ENCODE measurements at regions of chr7 and their contacts with region 1.

Region 1: DNA sequence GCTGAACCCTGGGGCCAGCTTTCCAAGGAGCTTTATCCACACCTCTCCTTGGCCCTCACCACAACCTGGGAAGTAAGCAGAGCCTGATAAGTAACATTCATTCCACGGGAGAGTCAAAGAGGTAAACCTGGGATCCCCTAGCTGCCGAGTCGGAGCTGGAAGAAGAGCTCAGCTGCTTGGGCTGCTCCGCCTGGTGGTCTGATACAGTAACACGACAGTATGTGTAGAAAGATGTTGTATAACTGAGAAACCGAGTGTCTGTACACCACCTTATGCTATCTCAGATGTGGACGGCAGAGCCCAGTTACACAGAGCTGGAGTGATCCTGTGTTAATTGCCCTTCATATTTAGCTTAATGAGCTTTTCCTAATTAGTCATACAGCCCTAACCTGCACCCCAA is 151.3 kb upstream of the KMT2E start:
- DNase-seq: peak in 1 of 2 experiments; percentile 60
- H3K4me3 ChIP-seq: no peak overlapping the region
- H3K27ac ChIP-seq: no peak overlapping the region
- H3K4me1 ChIP-seq: no peaks in the 10 kb centered on the region
- H3K27me3 ChIP-seq: no peaks in the 10 kb centered on the region; a peak in 2 of 7 replicates
- CTCF ChIP-seq: peak; percentile 52 to 73 (median 73)
- EP300 ChIP-seq: no peak
- POLR2A ChIP-seq: no peak
- RAD21 ChIP-seq: peak; percentile 50 to 69

Region 2: DNA sequence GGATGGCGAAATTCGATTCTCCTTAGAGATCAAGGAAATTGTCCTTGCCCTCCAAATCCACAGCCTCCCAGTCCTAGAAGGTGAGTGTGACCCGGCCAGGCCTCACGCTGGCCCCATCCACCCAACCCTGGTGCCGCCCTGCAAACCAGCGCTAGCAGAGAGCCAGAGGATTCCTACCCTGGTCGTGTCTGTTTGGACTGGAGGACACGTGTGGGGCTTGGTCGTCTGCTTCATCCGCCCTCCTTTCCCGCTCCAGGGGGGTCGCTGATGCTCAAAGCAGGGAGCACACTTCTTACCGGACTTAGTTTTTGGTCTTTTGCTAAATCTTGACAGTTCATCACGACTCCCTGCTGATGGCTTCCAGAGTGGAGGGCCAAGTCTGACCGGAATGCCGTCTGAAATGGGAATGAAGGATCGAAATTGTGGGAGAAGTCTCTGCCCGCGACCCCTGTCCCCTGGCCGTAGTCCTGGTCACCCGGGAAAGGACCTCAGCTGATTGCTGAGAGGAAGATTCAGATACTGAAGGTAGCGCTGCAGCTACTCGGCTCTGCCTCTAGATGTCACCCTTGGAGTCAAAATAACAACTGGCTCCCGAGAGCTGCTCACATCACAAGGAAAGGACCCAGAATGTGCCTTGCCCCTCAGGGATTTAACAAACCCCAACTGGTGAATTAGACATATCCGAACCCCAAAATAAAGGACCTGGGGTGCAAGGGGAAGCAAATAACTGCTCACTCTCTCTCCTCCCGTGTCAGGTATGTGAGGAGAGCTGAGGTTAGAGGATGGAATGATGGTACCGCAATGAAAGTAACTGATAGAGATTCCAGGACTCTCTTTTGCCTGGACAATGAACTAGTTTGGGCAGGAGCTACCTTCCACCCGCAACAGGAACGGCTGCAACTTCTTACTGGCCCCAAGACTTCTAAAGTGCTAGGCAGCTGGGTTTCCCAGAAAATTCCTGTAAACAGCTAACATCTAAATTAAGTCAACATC is 631.4 kb before region 1 on chr7:
- CTCF ChIA-PET with region 1: interaction called, 14 read pairs
- POLR2A ChIA-PET with region 1: no interaction called
- DNase-seq: peak in 1 of 2 experiments; percentile 68
- H3K4me3 ChIP-seq: peak overlapping the region in 1 of 4 experiments; percentile 22; a peak in 1 of 8 replicates
- H3K27ac ChIP-seq: no peak overlapping the region
- H3K4me1 ChIP-seq: peaks cover 0 to 6% (median 2%) of the 10 kb centered on the region in 4 experiments; a peak in 3 of 7 replicates
- H3K27me3 ChIP-seq: no peaks in the 10 kb centered on the region
- CTCF ChIP-seq: peak; percentile 65 to 88 (median 84)
- EP300 ChIP-seq: no peak
- POLR2A ChIP-seq: no peak
- RAD21 ChIP-seq: peak; percentile 85 to 91

Region 3: DNA sequence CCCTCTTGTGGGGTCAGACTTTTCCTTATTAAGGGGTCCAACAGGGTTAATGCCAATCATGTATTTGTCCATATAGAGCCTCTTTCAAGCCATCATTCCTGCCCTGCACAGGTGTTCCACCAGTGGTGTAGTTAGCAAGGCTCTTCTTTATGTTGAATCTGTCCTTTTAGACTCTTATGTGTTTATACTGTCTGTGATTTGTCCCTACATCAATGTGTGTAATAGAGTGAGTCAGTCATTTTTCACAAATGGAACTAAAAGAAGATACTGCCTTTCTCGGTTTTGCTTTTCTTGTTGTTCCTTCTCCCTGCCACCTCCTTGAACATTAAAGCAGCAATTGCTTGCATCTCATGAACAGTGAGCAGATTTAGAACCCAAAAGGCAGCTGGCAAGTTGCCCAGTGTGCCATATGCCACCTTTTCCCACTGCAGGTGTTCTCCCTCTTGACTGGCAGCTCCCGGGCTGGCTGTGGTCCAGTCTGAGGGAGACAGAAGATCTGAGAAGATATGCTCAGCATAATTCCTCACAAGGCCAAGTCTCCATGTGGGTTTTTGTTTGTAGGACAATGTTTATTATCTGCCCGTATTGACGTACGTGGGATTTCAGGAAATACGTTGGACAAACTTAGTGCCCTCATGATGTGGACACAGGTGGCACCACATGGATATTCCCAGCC is 380.2 kb before region 1 on chr7:
- CTCF ChIA-PET with region 1: no interaction called
- POLR2A ChIA-PET with region 1: no interaction called
- DNase-seq: no peak
- H3K4me3 ChIP-seq: no peak overlapping the region
- H3K27ac ChIP-seq: no peak overlapping the region
- H3K4me1 ChIP-seq: no peaks in the 10 kb centered on the region
- H3K27me3 ChIP-seq: no peaks in the 10 kb centered on the region
- CTCF ChIP-seq: no peak
- EP300 ChIP-seq: no peak
- POLR2A ChIP-seq: no peak
- RAD21 ChIP-seq: no peak

Region 4: DNA sequence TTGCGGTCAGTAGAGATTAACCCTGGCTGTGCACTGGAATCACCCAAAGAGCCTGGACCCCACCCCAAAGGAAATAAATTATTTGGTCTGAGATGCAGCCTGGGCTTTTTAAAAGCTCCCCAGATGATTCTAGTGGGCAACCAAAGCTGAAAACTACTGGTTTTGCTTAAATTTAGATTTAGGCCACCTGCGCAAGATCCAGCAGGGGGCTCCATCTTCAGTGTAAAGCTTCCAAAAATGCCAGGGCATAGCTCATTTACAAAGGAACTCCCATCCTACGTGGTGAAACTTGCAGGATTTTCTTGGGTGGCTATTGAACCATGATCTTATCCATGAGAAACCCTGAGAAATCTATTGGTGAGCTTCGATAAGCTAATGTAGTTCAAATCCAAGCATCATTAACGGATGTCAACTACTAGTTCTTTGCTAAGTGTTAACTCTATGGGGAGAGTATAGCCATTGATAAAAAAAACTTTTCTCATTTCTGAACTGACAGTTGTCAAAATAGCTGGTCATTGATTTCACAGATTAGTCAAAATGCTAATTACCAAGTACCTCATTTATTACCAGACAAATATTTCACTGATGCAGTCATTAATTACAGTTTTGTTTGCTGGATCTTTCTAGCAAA is 219.0 kb before region 1 on chr7:
- CTCF ChIA-PET with region 1: interaction called, 21 read pairs
- POLR2A ChIA-PET with region 1: no interaction called
- DNase-seq: peak; percentile 7 to 48
- H3K4me3 ChIP-seq: no peak overlapping the region
- H3K27ac ChIP-seq: no peak overlapping the region
- H3K4me1 ChIP-seq: no peaks in the 10 kb centered on the region
- H3K27me3 ChIP-seq: no peaks in the 10 kb centered on the region
- CTCF ChIP-seq: peak; percentile 19 to 73 (median 63)
- EP300 ChIP-seq: no peak
- POLR2A ChIP-seq: no peak
- RAD21 ChIP-seq: peak; percentile 69 to 79

Region 5: DNA sequence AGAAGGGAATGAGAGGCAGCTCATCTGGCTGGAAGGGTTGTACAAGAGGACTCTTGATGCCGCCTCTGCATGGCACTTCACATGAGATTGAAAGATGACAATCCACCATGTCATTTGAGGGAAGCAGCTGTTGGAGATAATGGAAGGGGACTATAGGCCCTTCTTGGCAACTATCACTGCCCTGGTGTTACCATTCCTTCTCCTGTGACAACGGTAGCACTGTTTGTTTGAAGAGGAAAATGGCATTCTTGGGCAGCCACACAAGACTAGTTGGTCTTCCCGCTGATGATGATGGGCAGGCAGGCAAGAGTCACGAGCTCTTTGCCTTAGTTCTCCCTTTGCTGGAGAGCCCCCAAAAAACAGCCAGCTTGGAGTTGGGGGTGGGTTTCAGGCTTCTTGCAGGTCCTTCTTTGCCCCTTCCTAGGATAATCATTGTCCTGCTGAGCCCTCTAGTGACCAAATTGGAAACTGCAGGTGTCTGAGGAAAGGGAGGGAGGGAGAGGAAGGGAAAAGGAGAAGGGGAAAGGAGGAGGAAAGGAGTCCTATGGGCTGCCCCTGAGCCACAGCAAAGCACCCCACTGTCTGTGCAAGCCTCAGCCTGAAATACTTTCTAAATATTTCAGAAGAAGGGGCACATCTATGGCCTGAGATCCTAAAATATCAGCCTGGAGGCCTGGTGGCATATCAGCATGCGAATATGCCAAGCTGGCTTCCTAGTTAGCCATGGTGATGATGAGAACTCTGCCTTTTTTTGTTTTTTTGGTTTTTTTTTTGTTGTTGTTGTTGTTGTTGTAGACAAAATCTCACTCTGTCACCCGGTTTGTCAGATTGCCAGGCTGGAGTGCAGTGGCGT is 14.4 kb before region 1 on chr7:
- CTCF ChIA-PET with region 1: interaction called, 66 read pairs
- POLR2A ChIA-PET with region 1: no interaction called
- DNase-seq: peak; percentile 41 to 94
- H3K4me3 ChIP-seq: no peak overlapping the region
- H3K27ac ChIP-seq: no peak overlapping the region
- H3K4me1 ChIP-seq: peaks cover 0 to 3% (median 0%) of the 10 kb centered on the region in 4 experiments; a peak in 1 of 7 replicates
- H3K27me3 ChIP-seq: no peaks in the 10 kb centered on the region
- CTCF ChIP-seq: peak; percentile 29 to 91 (median 86)
- EP300 ChIP-seq: no peak
- POLR2A ChIP-seq: no peak
- RAD21 ChIP-seq: peak; percentile 95 to 96

Region 6: DNA sequence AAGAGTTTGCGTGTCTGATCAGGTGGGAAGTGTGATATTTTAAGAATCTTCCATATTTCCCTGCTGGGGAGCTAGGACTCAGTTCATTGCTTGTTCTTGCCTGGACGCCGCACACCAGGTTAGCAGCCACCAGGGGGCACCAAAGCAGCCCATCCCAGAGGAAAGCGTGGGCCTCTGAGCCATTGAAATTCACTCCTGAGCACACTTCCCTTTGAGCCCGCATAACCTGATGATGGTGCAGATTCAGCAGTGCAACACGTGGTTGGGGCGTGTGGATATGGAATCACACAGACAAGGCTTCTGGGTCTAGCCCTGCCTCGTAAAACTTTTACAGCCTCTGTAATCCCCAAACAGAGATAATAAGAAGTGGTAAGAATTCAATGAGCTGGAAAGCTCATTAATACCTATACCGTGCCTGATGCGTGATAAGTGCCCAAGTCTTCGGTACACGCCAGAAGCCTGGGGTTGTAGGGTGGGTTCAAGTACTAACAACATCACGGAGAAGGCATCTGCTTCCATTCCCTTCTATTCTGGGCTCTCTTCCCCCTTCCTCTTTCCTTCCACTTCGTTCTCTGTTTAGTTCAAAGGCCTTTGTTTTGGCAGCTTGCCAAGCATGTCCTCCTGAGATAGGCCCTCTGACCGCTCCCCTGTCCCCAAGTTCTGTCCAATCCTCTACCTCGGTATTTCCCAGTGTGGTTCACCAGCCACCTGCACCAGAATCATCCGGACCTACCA is 21.2 kb after region 1 on chr7:
- CTCF ChIA-PET with region 1: interaction called, 29 read pairs
- POLR2A ChIA-PET with region 1: no interaction called
- DNase-seq: peak; percentile 68 to 93
- H3K4me3 ChIP-seq: no peak overlapping the region
- H3K27ac ChIP-seq: no peak overlapping the region
- H3K4me1 ChIP-seq: peaks cover 0 to 2% (median 0%) of the 10 kb centered on the region in 4 experiments; a peak in 2 of 7 replicates
- H3K27me3 ChIP-seq: peaks cover 0 to 2% (median 0%) of the 10 kb centered on the region in 4 experiments; a peak in 2 of 7 replicates
- CTCF ChIP-seq: peak; percentile 87 to 97 (median 94)
- EP300 ChIP-seq: no peak
- POLR2A ChIP-seq: no peak
- RAD21 ChIP-seq: peak; percentile 70 to 77

Region 7: DNA sequence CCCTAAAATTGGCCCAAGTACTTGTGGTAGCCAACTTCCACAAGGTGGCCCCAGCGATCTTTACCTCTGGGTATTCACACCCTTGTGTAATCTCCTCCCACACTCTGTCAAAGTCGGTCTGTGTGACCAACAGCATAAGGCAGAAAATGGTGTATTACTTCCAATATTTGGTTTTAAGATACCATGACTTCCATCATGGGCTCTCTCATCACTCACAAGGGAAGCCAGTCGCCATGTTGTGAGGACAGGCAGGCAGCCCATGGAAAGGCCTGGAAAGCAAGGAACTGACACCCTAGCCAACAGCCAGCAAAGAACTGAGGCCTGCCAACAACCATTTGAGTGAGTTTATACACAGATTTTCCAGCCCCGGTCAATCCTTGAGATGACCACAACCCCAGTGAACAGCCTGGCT is 60.3 kb after region 1 on chr7:
- CTCF ChIA-PET with region 1: interaction called, 14 read pairs
- POLR2A ChIA-PET with region 1: no interaction called
- DNase-seq: peak; percentile 41 to 63
- H3K4me3 ChIP-seq: no peak overlapping the region
- H3K27ac ChIP-seq: no peak overlapping the region
- H3K4me1 ChIP-seq: no peaks in the 10 kb centered on the region; a peak in 1 of 7 replicates
- H3K27me3 ChIP-seq: no peaks in the 10 kb centered on the region
- CTCF ChIP-seq: peak; percentile 57 to 87 (median 73)
- EP300 ChIP-seq: no peak
- POLR2A ChIP-seq: no peak
- RAD21 ChIP-seq: peak; percentile 96 to 97

Region 8: DNA sequence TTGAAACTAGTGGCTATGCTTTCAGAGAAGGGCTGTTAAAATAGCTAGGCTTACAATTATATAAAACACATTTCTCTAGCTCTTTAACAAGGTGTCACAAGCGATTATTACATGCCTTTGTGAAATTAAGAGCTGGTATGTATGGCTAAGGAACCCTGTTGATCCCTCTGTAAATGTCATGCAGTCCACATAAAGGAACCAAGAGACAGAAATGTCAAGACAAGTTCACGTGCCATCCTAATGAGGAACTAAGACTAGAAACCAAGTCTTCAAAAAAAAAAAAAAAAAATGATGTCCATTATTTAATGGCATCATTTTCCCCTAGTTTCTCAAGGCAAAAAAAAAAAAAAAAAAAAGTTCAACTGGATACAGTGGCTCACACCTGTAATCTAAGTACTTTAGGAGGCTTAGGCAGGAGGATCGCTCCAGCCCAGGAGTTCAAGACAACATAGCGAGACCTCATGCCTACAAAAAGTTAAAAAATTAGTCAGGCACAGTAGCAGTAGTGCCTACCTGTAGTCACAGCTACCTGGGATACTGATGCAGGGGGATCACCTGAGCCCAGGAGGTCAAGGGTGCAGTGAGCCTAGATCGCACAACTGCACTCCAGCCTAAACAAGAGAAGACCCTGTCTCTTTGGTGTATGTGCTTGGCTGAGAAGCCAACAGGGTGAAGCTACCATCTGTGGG is 462.6 kb after region 1 on chr7:
- CTCF ChIA-PET with region 1: no interaction called
- POLR2A ChIA-PET with region 1: no interaction called
- DNase-seq: peak in 1 of 2 experiments; percentile 47
- H3K4me3 ChIP-seq: no peak overlapping the region
- H3K27ac ChIP-seq: no peak overlapping the region
- H3K4me1 ChIP-seq: no peaks in the 10 kb centered on the region
- H3K27me3 ChIP-seq: no peaks in the 10 kb centered on the region
- CTCF ChIP-seq: no peak
- EP300 ChIP-seq: no peak
- POLR2A ChIP-seq: no peak
- RAD21 ChIP-seq: no peak

Measured in H1 (cell line).